GM23248 (cell line): ENCODE measurements at regions of chr18 and their contacts with region 1.

Region 1: GRCh38 chr18:55415258-55415871 is 172.6 kb downstream of the TCF4 start:
- DNase-seq: peak; percentile 91
- H3K4me3 ChIP-seq: no peak overlapping the region
- H3K27ac ChIP-seq: no peak overlapping the region
- H3K4me1 ChIP-seq: peaks cover 67% of the 10 kb centered on the region
- H3K27me3 ChIP-seq: no peaks in the 10 kb centered on the region

Region 2: DNA sequence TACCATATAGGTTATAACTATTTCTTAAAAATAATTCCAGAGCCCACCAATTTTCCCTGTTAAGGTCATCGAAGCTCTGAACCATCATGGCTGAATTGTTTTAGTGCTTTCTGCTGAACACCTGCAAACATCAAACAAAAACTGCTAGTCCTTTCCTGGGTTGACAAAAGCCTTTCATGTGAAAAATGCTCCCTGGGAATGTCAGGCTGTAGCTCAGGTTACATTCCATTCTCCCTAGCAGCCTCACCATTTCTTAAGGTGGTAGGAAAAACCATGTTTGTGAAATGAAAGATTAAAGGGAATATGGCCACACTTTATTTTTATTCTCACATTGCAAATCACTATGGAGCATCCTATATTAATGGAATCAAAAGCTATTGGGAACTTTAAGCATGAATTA is 167.0 kb after region 1 on chr18:
- in situ Hi-C with region 1: loop called (anchors 5 kb)
- DNase-seq: no peak
- H3K4me3 ChIP-seq: no peak overlapping the region
- H3K27ac ChIP-seq: no peak overlapping the region
- H3K4me1 ChIP-seq: peaks cover 35% of the 10 kb centered on the region
- H3K27me3 ChIP-seq: no peaks in the 10 kb centered on the region

Region 3: DNA sequence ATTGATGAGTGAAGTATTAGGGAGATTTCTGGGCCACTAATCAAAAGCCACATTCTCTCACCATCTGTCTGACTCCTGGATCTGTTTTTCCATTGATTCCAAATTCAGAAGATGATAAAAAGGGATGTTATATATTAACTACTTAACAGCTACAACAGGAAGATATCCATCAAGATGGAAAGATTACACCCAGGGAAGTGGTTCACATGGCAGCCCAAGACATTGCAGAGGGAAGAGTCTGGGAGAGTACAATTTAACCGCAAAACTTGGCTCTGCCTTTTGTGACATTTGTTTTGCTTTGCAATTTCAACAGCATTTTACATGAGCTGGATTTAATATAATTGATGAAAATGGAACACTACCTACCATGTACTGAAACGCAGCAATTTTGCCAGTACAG is 195.1 kb after region 1 on chr18:
- in situ Hi-C with region 1: no loop called
- DNase-seq: no peak
- H3K4me3 ChIP-seq: no peak overlapping the region
- H3K27ac ChIP-seq: no peak overlapping the region
- H3K4me1 ChIP-seq: no peaks in the 10 kb centered on the region
- H3K27me3 ChIP-seq: no peaks in the 10 kb centered on the region

Region 4: DNA sequence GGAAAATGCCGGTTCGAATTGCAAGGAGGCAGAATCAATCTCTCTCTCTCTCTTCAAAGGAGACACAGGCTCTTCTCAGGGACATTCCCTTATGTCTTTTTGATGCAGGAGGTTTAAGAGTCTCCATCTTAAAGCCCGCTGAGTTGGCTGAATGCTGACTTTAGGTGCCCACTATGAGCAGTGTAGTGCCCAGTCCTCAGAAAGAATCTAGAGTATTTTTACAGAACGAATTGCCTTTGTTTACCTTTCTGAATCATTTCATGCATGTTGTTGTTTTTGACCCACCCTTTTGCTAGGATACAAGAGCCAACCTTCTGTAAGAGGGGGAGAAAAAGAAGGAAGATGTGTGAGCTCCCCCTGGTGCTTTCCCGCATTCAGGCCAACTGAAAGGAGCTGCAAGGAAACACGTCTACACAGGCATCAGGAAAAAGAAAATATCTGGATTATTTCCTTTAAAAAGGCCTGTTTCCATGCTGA is 366.2 kb after region 1 on chr18:
- in situ Hi-C with region 1: loop called (anchors 10 kb)
- DNase-seq: peak; percentile 76
- H3K4me3 ChIP-seq: no peak overlapping the region
- H3K27ac ChIP-seq: no peak overlapping the region
- H3K4me1 ChIP-seq: no peaks in the 10 kb centered on the region
- H3K27me3 ChIP-seq: no peaks in the 10 kb centered on the region

Region 5: DNA sequence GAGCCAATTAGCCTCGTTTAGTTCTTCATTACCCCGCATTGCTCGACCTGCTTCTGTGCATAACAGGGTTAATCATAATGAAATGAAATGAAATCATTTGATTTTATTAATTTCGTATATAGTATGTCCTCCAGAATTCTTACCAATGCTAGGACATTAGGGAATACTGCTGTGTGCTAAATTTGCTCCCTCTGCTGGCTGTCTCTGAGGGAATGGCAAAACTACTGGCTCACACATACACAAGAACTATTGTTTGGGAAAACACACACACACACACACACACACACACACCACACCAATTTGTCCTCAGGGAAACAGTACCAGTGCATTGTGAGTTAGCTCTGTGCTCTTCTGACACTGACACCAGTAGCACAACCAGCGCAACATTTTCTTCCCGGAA is 445.9 kb after region 1 on chr18:
- in situ Hi-C with region 1: loop called (anchors 5 kb)
- DNase-seq: peak; percentile 68
- H3K4me3 ChIP-seq: no peak overlapping the region
- H3K27ac ChIP-seq: no peak overlapping the region
- H3K4me1 ChIP-seq: peaks cover 43% of the 10 kb centered on the region
- H3K27me3 ChIP-seq: no peaks in the 10 kb centered on the region

Region 6: GRCh38 chr18:56563568-56563967 is 1148.2 kb after region 1 on chr18:
- in situ Hi-C with region 1: loop called (anchors 25 kb)
- DNase-seq: no peak
- H3K4me3 ChIP-seq: no peak overlapping the region
- H3K27ac ChIP-seq: no peak overlapping the region
- H3K4me1 ChIP-seq: peaks cover 16% of the 10 kb centered on the region
- H3K27me3 ChIP-seq: peaks cover 5% of the 10 kb centered on the region; the same call in 1 of the 2 replicates